Head of caudate nucleus (tissue), 42 donors: ENCODE measurements at regions of chr4 and their contacts with region 1.

Region 1: GRCh38 chr4:143335979-143336780 is 496 bp upstream of the GAB1 start:
- DNase-seq: peak; percentile 68 to 95 (median 86)

Region 2: GRCh38 chr4:143184217-143185116 is 151.7 kb before region 1 on chr4 and contains the start of gene USP38:
- intact Hi-C with region 1: loop called (anchors 5 kb)
- DNase-seq: peak; percentile 85 to 98 (median 94)

Region 3: DNA sequence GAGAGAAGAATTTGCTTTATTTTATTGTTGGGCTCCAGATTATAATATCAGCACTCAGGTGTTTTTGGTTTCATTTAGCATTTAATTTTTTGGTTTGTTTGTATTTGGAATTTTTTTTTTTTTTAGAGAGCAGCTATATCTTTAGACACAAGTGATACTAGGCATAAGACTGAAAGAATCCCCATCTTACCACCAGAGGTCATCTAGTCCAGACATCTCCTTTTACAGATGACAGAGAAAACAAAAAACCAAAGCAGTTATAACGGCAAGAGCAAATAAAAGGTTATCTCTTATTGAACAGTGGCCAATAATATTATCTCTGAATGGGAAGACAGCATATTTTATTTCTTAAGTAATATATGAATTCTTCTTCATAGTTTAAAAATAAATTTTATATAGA is 128.6 kb before region 1 on chr4:
- intact Hi-C with region 1: loop called (anchors 5 kb)
- DNase-seq: peak in 1 of 42 donors; percentile 27

Region 4: GRCh38 chr4:143241892-143242291 is 94.3 kb before region 1 on chr4:
- intact Hi-C with region 1: no loop called
- DNase-seq: no peak

Region 5: DNA sequence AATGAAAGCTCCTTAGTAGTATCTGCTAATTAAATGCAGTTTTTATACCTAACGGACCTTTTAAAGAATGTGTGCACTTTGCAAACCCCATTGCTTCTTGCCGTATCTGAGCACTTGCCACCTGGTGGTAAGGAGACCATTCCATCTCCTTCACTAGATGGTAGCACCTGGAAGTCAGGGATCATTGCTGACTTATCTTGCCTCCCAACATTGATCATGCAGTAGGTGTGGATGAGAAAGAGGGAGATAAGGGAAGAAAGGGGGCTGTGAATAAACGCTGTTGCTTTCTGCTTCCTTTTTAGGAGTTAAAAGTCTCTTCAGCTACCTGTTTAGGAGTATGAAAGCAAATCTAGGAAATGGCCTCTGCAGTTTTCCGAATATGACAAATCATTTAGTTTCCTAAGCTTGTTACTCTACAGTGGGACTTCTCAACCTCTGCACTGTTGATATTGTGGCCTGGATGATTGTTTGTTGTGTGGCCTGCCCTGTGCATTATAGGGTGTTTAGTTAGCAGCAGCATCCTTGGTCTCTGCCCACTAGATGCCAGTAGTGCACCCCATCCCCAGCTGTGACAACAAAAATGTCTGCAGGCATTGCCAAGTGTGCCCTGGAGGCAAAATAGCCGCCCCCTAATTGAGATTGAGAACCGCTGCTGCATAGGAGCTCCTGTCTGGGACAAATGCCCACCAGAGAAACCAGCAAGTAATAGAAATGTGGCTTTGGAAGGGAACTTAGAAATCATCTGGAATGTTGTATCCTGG is 39.3 kb after region 1 on chr4:
- intact Hi-C with region 1: loop called (anchors 5 kb)
- DNase-seq: peak; percentile 26 to 90 (median 74)

Region 6: DNA sequence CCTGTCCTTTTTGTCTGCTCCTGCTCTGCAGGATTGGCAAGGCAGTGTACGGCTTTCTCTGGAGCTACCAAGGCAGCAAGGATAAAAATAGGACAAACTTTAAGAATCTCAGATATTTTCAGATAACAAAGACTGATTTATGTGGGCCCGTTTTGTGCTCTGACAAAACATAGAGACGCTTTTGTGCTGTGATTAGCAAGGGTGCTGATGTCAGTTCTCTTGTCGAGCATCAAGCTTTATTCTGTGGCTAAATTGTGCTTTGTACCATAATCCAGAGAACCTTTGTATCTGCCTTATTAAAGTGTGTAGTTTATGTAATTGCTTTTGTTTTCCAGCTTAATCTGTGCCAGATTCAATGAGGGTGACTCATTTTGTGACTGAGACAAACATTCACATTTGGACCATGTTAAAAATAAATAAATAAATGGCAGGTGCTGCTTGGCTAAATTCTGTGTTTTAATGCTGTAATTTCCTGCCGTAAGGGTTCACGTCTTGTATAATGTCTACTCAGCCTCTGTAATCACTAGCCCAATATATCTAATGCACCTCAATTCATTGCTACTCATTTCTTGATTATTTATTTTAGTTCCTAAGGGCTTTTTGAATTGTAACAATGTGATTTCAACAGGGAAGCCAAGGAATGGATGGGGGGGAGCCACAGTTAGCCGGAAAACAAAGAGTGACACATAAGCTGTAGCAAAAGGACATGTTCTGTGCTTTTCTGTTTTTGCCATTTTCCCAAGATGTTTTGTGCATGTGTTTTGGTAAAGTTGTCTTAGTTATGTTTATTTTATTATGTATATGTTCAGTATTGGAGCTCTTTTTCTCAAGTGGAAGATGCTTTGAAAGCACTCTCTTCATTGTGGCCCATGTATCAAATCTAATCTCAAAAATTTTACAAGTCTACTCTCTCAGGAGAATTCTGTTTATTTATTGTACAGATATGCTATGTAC is 75.6 kb after region 1 on chr4:
- intact Hi-C with region 1: loop called (anchors 5 kb)
- DNase-seq: peak in 35 of 42 donors; percentile 24 to 87 (median 63)

Region 7: DNA sequence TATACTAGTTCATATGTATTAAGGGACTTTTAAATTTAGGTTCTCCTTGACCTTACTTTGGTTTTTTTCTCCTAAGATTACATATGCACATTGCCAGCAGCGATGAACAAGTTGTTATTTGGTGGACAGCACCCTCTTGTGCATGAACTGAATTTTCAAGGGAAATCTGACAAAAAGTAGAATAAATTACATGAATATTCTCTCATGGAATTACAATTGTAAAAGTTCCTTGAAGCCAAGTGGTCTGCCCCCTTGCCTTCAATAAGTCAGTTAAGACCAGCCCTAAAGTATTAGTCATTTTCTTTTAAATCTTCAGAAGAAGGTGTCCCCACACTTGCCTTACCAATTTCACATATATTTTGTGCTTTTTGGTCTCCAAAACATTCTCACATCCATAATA is 146.7 kb after region 1 on chr4:
- intact Hi-C with region 1: loop called (anchors 10 kb)
- DNase-seq: peak in 28 of 42 donors; percentile 18 to 80 (median 47)

Region 8: GRCh38 chr4:143513306-143514168 is 177.4 kb after region 1 on chr4 and contains the start of gene SMARCA5:
- intact Hi-C with region 1: loop called (anchors 10 kb)
- DNase-seq: peak; percentile 92 to 98 (median 95)